CD8-positive, alpha-beta T cell (primary cell): ENCODE measurements at regions of chr7 and their contacts with region 1.

Region 1: GRCh38 chr7:30062591-30062990 is 34.4 kb downstream of the PLEKHA8 start:
- DNase-seq: peak in 2 of 9 experiments; percentile 33 to 51
- ATAC-seq: peak; percentile 49
- H3K4me3 ChIP-seq: no peak overlapping the region
- H3K4me3 Mint-ChIP-seq: no peak overlapping the region
- H3K27ac ChIP-seq: no peak overlapping the region
- H3K27ac Mint-ChIP-seq: no peak overlapping the region
- H3K4me1 ChIP-seq: no peaks in the 10 kb centered on the region
- H3K4me1 Mint-ChIP-seq: peaks cover 7% of the 10 kb centered on the region
- H3K27me3 ChIP-seq: no peaks in the 10 kb centered on the region
- H3K27me3 Mint-ChIP-seq: no peaks in the 10 kb centered on the region
- CTCF ChIP-seq: peak; percentile 60

Region 2: GRCh38 chr7:29878081-29878688 is 184.4 kb before region 1 on chr7:
- CTCF ChIA-PET with region 1: interaction called, 32 read pairs
- POLR2A ChIA-PET with region 1: no interaction called
- intact Hi-C with region 1: loop called (anchors 1 kb)
- DNase-seq: peak in 5 of 9 experiments; percentile 26 to 49 (median 35)
- ATAC-seq: peak; percentile 36
- H3K4me3 ChIP-seq: no peak overlapping the region
- H3K4me3 Mint-ChIP-seq: no peak overlapping the region
- H3K27ac ChIP-seq: no peak overlapping the region
- H3K27ac Mint-ChIP-seq: no peak overlapping the region
- H3K4me1 ChIP-seq: peaks cover 11% of the 10 kb centered on the region
- H3K4me1 Mint-ChIP-seq: peaks cover 5% of the 10 kb centered on the region
- H3K27me3 ChIP-seq: no peaks in the 10 kb centered on the region
- H3K27me3 Mint-ChIP-seq: peaks cover 8% of the 10 kb centered on the region
- CTCF ChIP-seq: peak; percentile 48

Region 3: DNA sequence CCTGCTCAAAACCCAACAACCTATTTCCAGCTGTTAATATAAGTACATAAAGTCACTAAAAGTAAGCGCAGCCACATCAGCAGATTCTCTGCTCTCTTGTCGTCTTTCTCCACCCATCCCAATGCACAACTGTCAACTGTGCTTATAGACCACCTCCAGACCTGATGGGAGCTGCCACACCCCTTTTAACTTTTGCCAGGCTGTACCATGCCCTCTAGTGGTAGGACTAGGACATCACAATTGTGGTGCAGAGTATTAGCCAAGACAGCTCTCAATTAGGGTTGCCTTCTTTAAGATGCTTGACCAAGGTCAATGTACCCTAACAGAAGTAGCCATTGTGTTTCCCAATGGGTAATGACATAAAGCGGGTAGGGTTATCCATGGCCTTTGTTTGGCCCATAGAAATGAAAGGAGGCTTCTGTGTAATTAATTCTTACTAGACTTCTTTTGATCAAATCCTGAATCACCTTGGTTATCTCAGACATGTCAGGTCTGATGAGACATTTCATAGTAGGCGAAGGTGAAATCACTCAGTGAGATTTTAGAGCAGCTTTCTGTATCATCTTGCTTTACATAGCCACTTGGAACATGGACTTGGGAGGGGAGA is 141.1 kb before region 1 on chr7:
- CTCF ChIA-PET with region 1: interaction called, 29 read pairs
- POLR2A ChIA-PET with region 1: no interaction called
- intact Hi-C with region 1: loop called in 1 of 2 experiments (anchors 1 kb)
- DNase-seq: peak in 8 of 9 experiments; percentile 6 to 67 (median 40)
- ATAC-seq: peak; percentile 92
- H3K4me3 ChIP-seq: no peak overlapping the region
- H3K4me3 Mint-ChIP-seq: no peak overlapping the region
- H3K27ac ChIP-seq: no peak overlapping the region
- H3K27ac Mint-ChIP-seq: no peak overlapping the region
- H3K4me1 ChIP-seq: no peaks in the 10 kb centered on the region
- H3K4me1 Mint-ChIP-seq: no peaks in the 10 kb centered on the region
- H3K27me3 ChIP-seq: peaks cover 0 to 2% of the 10 kb centered on the region in 2 experiments
- H3K27me3 Mint-ChIP-seq: no peaks in the 10 kb centered on the region
- CTCF ChIP-seq: peak; percentile 90

Region 4: DNA sequence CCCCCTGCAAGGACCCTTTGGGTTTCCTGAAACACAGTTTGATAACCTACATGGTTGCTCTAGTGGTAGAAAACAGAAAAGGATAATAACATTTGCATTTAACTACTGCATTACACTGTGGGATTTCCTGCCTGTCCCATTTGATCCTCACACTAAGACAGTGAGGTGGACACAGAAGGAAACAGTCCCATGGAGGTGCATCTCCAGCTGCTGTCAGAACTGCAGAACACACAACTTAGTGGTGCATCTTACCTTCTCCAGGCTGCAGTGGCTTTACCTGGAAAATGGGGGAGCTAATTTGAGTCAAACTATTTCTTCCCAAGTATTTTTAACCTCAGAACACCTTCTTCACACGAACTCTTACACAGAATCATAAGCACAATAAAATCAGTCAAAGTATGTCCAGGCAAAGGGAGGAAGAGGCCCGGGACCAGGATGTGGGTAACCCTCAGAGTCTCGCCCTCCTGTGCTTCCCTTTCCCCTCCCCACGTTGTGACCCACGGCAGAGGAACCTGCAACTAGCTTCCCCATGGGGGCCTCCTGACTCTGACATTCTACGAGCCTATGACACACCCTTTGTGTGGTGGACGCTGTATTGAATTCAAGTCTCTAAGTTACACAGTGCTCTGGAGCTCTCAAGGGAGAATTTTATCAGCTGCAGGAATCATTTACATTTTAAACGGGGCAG is 106.6 kb before region 1 on chr7:
- CTCF ChIA-PET with region 1: interaction called, 14 read pairs
- POLR2A ChIA-PET with region 1: no interaction called
- intact Hi-C with region 1: loop called (anchors 5 kb)
- DNase-seq: peak in 5 of 9 experiments; percentile 3 to 55 (median 26)
- ATAC-seq: peak; percentile 66
- H3K4me3 ChIP-seq: no peak overlapping the region
- H3K4me3 Mint-ChIP-seq: peak overlapping the region; percentile 31
- H3K27ac ChIP-seq: no peak overlapping the region
- H3K27ac Mint-ChIP-seq: peak overlapping the region; percentile 73
- H3K4me1 ChIP-seq: peaks cover 17% of the 10 kb centered on the region
- H3K4me1 Mint-ChIP-seq: peaks cover 19% of the 10 kb centered on the region
- H3K27me3 ChIP-seq: no peaks in the 10 kb centered on the region
- H3K27me3 Mint-ChIP-seq: no peaks in the 10 kb centered on the region
- CTCF ChIP-seq: no peak

Region 5: GRCh38 chr7:30041521-30042269 is 20.9 kb before region 1 on chr7:
- CTCF ChIA-PET with region 1: interaction called, 12 read pairs
- POLR2A ChIA-PET with region 1: no interaction called
- intact Hi-C with region 1: no loop called
- DNase-seq: no peak
- ATAC-seq: no peak
- H3K4me3 ChIP-seq: no peak overlapping the region
- H3K4me3 Mint-ChIP-seq: no peak overlapping the region
- H3K27ac ChIP-seq: no peak overlapping the region
- H3K27ac Mint-ChIP-seq: peak overlapping the region; percentile 12
- H3K4me1 ChIP-seq: no peaks in the 10 kb centered on the region
- H3K4me1 Mint-ChIP-seq: peaks cover 17% of the 10 kb centered on the region
- H3K27me3 ChIP-seq: no peaks in the 10 kb centered on the region
- H3K27me3 Mint-ChIP-seq: no peaks in the 10 kb centered on the region
- CTCF ChIP-seq: no peak

Region 6: GRCh38 chr7:30630986-30631385 is 568.4 kb after region 1 on chr7:
- CTCF ChIA-PET with region 1: no interaction called
- POLR2A ChIA-PET with region 1: no interaction called
- intact Hi-C with region 1: no loop called
- DNase-seq: no peak
- ATAC-seq: no peak
- H3K4me3 ChIP-seq: no peak overlapping the region
- H3K4me3 Mint-ChIP-seq: no peak overlapping the region
- H3K27ac ChIP-seq: no peak overlapping the region
- H3K27ac Mint-ChIP-seq: no peak overlapping the region
- H3K4me1 ChIP-seq: no peaks in the 10 kb centered on the region
- H3K4me1 Mint-ChIP-seq: no peaks in the 10 kb centered on the region
- H3K27me3 ChIP-seq: no peaks in the 10 kb centered on the region
- H3K27me3 Mint-ChIP-seq: no peaks in the 10 kb centered on the region
- CTCF ChIP-seq: no peak

Region 7: DNA sequence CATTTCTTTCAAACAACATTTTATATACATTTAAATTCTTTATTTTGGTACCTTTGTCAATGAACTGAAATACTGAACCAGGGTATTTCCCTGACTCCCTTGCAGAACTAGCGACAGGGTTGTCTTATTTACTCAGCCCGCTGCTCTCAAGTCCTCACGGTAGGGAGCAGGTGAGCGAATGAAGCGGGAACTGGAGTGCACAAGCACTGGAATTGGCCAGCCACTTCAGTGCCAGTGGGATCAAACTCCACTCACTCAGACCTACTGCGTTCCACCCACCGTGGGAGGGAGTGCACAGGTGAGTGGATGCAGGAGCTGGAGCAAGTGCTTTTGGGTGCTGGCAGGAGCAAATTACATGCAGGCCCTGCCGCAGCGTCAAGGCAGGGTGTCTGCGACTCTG is 1306.0 kb after region 1 on chr7:
- CTCF ChIA-PET with region 1: no interaction called
- POLR2A ChIA-PET with region 1: no interaction called
- intact Hi-C with region 1: no loop called
- DNase-seq: no peak
- ATAC-seq: no peak
- H3K4me3 ChIP-seq: no peak overlapping the region
- H3K4me3 Mint-ChIP-seq: no peak overlapping the region
- H3K27ac ChIP-seq: no peak overlapping the region
- H3K27ac Mint-ChIP-seq: no peak overlapping the region
- H3K4me1 ChIP-seq: no peaks in the 10 kb centered on the region
- H3K4me1 Mint-ChIP-seq: no peaks in the 10 kb centered on the region
- H3K27me3 ChIP-seq: no peaks in the 10 kb centered on the region
- H3K27me3 Mint-ChIP-seq: no peaks in the 10 kb centered on the region
- CTCF ChIP-seq: no peak